ENCODE measurements at regions of chr19 and their contacts with region 1.

Region 1: DNA sequence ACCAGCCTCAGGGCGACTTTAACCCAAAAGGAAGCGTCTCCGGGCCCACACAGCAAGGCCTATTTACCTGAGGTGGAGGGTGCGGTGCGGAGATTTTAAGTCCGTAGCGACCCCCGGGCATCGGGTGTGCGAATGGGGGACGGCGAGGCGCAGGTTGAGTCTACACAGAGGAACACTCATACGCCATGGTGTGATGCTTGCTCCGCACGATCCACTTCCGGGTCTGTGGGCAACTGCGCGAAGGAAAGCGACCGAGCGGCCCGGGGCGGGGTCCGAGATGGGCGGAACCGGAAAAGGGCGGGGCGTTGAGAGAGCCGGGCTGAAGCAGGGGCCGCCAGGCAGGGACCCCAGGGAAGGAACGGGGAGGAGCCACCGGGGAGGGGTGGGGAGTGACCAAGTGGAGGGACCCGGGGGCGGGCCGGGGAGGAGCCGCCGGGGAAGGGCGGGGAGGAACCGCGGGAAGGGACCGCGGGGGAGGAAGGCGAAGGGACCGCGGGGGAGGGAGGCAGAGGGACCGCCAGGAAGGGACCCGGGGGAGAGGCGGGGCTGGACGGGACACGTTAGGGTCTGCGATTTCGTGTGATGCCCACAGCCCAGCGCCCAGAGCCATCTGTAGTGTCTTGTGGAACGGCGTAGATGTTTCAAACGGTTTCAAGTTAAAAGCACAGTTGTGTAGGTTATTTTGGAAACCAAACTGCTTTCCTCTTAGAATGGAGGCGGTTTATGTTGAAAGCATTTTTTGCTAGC is at the start of gene ZNF160:
- DNase-seq: peak; percentile 98
- H3K4me3 ChIP-seq: peak within 1 kb of the TSS; percentile 79 to 93 (median 90)
- H3K27ac ChIP-seq: peak within 1 kb of the TSS; percentile 94
- H3K4me1 ChIP-seq: peaks cover 11% of the 10 kb centered on the region
- H3K27me3 ChIP-seq: no peaks in the 10 kb centered on the region
- CTCF ChIP-seq: no peak
- POLR2A ChIP-seq: peak; percentile 72
- total RNA-seq, gene ZNF160: 16.4 and 19.7 TPM in 2 replicates

Region 2: DNA sequence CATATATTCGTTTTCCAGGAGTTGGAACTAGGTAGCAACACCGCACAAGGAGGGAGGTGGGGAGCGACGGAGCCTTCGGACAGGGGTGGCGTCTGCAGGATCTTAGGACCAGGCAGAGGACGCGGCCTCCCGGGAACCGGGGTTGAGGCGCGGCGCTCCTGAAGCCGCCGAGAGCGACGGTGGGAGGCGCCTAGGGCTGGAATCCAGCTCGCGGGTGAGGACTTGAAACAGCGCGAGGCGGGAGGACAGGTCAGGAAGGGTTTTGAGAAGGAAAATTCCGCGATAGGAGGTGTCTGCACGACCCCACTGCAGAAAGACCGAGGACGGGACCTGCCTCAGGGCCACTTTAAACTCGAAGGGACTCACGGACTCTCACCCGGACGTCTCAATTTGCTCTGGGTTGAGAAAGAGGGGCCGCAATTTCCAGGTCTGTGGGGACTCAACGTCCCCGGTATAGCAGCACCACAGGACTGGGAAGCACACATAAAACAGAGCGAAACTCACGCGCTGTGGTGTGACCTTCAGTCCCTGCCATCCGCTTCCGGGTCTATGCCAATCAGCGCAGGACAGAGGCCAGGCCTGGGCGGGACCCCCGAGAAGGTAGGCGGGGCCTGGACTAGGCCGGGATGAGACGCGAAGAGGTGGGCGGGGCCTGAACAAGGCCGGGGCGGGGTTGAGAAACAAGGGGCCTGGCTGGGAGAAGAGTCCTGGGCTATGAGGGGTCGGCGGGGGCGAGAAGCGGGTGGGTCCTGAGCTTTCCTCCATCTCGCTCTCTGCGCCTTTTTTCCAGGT is 206.0 kb before region 1 on chr19 and contains the start of gene ZNF320:
- CTCF ChIA-PET with region 1: no interaction called
- POLR2A ChIA-PET with region 1: no interaction called
- dilution Hi-C with region 1: no loop called
- intact Hi-C with region 1: loop called (anchors 5 kb)
- DNase-seq: peak; percentile 96
- H3K4me3 ChIP-seq: peak within 1 kb of the TSS; percentile 83 to 99 (median 97)
- H3K27ac ChIP-seq: peak within 1 kb of the TSS; percentile 89
- H3K4me1 ChIP-seq: peaks cover 6% of the 10 kb centered on the region
- H3K27me3 ChIP-seq: no peaks in the 10 kb centered on the region
- CTCF ChIP-seq: no peak
- POLR2A ChIP-seq: peak; percentile 69
- total RNA-seq, gene ZNF320: 10.9 and 11.1 TPM in 2 replicates

Region 3: DNA sequence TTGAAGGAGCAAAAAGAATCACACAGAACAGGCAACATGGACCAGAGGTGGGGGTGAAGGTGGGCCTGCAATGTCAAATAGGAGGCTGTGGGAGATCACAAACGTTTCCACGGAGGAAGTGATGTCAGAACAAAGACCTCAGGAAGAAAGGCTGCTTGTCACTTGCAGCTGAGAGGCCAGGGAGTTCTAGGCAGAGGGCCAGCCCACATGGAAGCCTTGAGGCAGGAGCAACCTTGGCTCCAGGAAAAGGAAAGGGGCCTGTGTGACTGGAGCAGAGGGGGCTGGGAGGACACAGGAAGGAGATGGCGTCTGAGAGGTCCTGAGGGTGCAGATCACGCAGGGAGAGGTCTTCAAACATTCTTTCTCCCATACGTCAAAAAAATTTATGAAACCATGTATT is 16.4 kb before region 1 on chr19:
- CTCF ChIA-PET with region 1: interaction called, 4 read pairs
- POLR2A ChIA-PET with region 1: interaction called, 3 read pairs
- dilution Hi-C with region 1: no loop called
- intact Hi-C with region 1: loop called (anchors 1 kb)
- DNase-seq: peak; percentile 94
- H3K4me3 ChIP-seq: no peak overlapping the region
- H3K27ac ChIP-seq: peak overlapping the region; percentile 92
- H3K4me1 ChIP-seq: peaks cover 23% of the 10 kb centered on the region
- H3K27me3 ChIP-seq: no peaks in the 10 kb centered on the region
- CTCF ChIP-seq: no peak
- POLR2A ChIP-seq: peak; percentile 50

Region 4: GRCh38 chr19:53158119-53158656 is 54.8 kb after region 1 on chr19:
- CTCF ChIA-PET with region 1: no interaction called
- POLR2A ChIA-PET with region 1: no interaction called
- dilution Hi-C with region 1: no loop called
- intact Hi-C with region 1: loop called (anchors 1 kb)
- DNase-seq: peak; percentile 18
- H3K4me3 ChIP-seq: peak overlapping the region; percentile 50 to 68 (median 66)
- H3K27ac ChIP-seq: no peak overlapping the region
- H3K4me1 ChIP-seq: peaks cover 8% of the 10 kb centered on the region
- H3K27me3 ChIP-seq: no peaks in the 10 kb centered on the region
- CTCF ChIP-seq: no peak
- POLR2A ChIP-seq: no peak

Region 5: GRCh38 chr19:53333463-53334449 is 230.4 kb after region 1 on chr19 and contains the start of gene ZNF845:
- CTCF ChIA-PET with region 1: no interaction called
- POLR2A ChIA-PET with region 1: no interaction called
- dilution Hi-C with region 1: no loop called
- intact Hi-C with region 1: loop called (anchors 5 kb)
- DNase-seq: peak; percentile 95
- H3K4me3 ChIP-seq: peak within 1 kb of the TSS; percentile 55 to 99 (median 98)
- H3K27ac ChIP-seq: peak within 1 kb of the TSS; percentile 84
- H3K4me1 ChIP-seq: peaks cover 2% of the 10 kb centered on the region
- H3K27me3 ChIP-seq: no peaks in the 10 kb centered on the region
- CTCF ChIP-seq: no peak
- POLR2A ChIP-seq: peak; percentile 62
- total RNA-seq, gene ZNF845: 4.6 and 5.0 TPM in 2 replicates

Measured in endothelial cell of umbilical vein (primary cell).